Esophagus muscularis mucosa (tissue), 4 donors: ENCODE measurements at regions of chr17 and their contacts with region 1.

Region 1: DNA sequence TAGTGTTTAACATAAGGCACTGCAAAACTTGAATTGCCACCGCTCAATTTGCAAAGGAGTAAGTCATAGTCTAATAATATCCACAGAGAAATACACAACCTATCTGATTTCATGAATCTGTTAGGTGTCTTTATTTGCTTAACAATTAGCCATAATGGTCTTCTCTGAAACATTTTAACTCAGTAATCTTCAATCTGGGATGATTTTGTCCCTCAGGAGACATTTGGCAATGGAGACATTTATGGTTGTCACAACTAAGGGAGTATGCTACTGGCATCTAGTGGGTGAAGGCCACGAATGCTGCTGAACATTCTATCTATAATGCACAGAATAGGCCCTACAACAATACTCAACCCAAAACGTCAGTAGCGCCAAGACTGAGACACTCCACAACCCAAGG is 4.3 kb downstream of the UBE2G1 start:
- DNase-seq: no peak
- H3K4me3 ChIP-seq: no peak overlapping the region
- H3K27ac ChIP-seq: peak overlapping the region in 3 of 4 donors; percentile 37 to 99 (median 98)
- H3K4me1 ChIP-seq: peaks cover 38 to 84% (median 81%) of the 10 kb centered on the region in 4 donors
- H3K27me3 ChIP-seq: peaks cover 0 to 4% (median 0%) of the 10 kb centered on the region in 4 donors
- CTCF ChIP-seq: peak in 1 of 3 experiments; percentile 27
- EP300 ChIP-seq: no peak
- POLR2A ChIP-seq: no peak

Region 2: GRCh38 chr17:4199818-4200402 is 162.2 kb before region 1 on chr17:
- intact Hi-C with region 1: loop called (anchors 5 kb)
- DNase-seq: no peak
- H3K4me3 ChIP-seq: no peak overlapping the region
- H3K27ac ChIP-seq: peak overlapping the region in 1 of 4 donors; percentile 13
- H3K4me1 ChIP-seq: peaks cover 0 to 21% (median 19%) of the 10 kb centered on the region in 4 donors
- H3K27me3 ChIP-seq: no peaks in the 10 kb centered on the region
- CTCF ChIP-seq: peak; percentile 75 to 82 (median 79)
- EP300 ChIP-seq: no peak
- POLR2A ChIP-seq: no peak

Region 3: GRCh38 chr17:4318186-4318585 is 44.0 kb before region 1 on chr17:
- intact Hi-C with region 1: loop called (anchors 5 kb)
- DNase-seq: no peak
- H3K4me3 ChIP-seq: no peak overlapping the region
- H3K27ac ChIP-seq: peak overlapping the region; percentile 30 to 65 (median 46)
- H3K4me1 ChIP-seq: peaks cover 49 to 81% (median 70%) of the 10 kb centered on the region in 4 donors
- H3K27me3 ChIP-seq: no peaks in the 10 kb centered on the region
- CTCF ChIP-seq: no peak
- EP300 ChIP-seq: no peak
- POLR2A ChIP-seq: no peak